Activated CD4-positive, alpha-beta T cell treated with anti-CD3 and anti-CD28 coated beads, Interleukin-2, amount 10 ng/mL, durations not matched to agents 24 days and 14 days (primary cell): ENCODE measurements at regions of chr12 and their contacts with region 1.

Region 1: DNA sequence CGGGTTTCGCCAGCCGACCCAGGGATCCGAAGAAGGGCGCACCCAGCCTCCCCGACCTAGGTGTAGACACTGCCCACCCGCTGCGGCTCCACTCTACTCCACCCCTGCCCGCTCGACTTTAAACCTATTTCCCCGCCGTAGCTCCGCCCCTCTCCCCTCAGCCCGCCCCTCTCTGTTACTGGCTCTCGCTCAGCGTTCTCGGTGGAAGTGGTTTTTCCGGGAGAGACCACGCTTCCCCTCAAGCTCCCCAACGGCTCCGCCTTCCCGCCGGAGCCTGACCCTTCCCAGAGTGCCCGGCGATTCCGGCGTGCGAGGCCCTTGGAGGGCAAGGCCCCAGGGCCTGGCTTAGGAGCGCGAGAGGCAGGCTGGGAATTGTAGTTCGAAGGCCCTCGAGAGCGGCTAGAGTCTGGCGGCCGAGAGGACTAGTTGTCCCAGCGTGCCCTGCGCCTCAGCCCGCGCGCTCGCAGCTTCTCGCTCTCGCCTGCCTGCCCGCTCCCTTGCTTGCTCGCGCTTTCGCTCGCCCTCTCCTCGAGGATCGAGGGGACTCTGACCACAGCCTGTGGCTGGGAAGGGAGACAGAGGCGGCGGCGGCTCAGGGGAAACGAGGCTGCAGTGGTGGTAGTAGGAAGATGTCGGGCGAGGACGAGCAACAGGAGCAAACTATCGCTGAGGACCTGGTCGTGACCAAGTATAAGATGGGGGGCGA is at the start of gene PA2G4:
- DNase-seq: peak; percentile 100
- H3K4me3 Mint-ChIP-seq: peak within 1 kb of the TSS; percentile 98
- H3K27ac Mint-ChIP-seq: peak within 1 kb of the TSS; percentile 98
- H3K4me1 Mint-ChIP-seq: peaks cover 38% of the 10 kb centered on the region
- H3K27me3 Mint-ChIP-seq: no peaks in the 10 kb centered on the region
- total RNA-seq, gene PA2G4: 453 and 472 TPM in 2 replicates

Region 2: GRCh38 chr12:55715833-55716581 is 388.3 kb before region 1 on chr12 and contains the start of gene BLOC1S1:
- intact Hi-C with region 1: loop called (anchors 1 kb)
- DNase-seq: peak; percentile 98
- H3K4me3 Mint-ChIP-seq: peak within 1 kb of the TSS; percentile 98
- H3K27ac Mint-ChIP-seq: peak within 1 kb of the TSS; percentile 98
- H3K4me1 Mint-ChIP-seq: peaks cover 27% of the 10 kb centered on the region
- H3K27me3 Mint-ChIP-seq: peaks cover 15% of the 10 kb centered on the region
- total RNA-seq, gene BLOC1S1: 62.7 and 64.8 TPM in 2 replicates

Region 3: DNA sequence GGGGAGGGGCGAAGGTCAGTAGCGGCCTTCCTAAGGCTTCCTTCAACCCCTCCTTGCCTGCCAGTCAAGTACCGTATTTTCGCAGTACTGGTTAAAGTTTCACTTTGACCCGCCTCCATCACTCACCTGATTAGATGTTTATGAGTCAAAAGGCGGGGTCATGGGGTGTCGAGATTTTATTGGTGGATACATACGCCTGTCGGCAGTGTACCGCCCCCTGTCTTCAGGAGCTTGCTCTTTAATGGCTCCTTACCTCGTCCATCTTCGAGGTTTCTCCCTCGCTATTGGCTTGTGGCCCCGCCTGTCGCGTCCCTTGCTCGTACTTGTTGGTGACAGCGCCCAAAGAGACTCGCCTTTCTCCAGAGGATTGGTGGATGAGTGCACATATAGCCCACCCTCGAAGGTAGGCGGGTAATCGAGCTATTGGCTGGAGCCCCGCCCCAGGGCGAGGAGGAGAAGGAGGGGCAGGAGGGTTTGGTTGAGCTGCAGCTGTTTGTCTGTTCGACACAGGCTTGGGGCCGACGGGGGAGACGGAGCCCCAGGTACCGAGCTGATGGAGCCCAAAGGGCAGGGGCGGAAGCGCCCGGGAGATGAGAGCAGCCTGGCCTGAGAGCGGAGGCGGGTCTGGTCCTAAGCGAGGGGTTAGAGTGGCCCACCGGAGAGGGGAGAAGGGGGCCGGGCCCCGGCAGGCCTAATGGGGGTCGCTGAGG is 130.5 kb before region 1 on chr12 and contains the start of gene RAB5B:
- intact Hi-C with region 1: loop called (anchors 1 kb)
- DNase-seq: peak; percentile 99
- H3K4me3 Mint-ChIP-seq: no peak within 1 kb of the TSS
- H3K27ac Mint-ChIP-seq: no peak within 1 kb of the TSS
- H3K4me1 Mint-ChIP-seq: peaks cover 28% of the 10 kb centered on the region
- H3K27me3 Mint-ChIP-seq: no peaks in the 10 kb centered on the region
- total RNA-seq, gene RAB5B: 39.0 and 40.2 TPM in 2 replicates

Region 4: DNA sequence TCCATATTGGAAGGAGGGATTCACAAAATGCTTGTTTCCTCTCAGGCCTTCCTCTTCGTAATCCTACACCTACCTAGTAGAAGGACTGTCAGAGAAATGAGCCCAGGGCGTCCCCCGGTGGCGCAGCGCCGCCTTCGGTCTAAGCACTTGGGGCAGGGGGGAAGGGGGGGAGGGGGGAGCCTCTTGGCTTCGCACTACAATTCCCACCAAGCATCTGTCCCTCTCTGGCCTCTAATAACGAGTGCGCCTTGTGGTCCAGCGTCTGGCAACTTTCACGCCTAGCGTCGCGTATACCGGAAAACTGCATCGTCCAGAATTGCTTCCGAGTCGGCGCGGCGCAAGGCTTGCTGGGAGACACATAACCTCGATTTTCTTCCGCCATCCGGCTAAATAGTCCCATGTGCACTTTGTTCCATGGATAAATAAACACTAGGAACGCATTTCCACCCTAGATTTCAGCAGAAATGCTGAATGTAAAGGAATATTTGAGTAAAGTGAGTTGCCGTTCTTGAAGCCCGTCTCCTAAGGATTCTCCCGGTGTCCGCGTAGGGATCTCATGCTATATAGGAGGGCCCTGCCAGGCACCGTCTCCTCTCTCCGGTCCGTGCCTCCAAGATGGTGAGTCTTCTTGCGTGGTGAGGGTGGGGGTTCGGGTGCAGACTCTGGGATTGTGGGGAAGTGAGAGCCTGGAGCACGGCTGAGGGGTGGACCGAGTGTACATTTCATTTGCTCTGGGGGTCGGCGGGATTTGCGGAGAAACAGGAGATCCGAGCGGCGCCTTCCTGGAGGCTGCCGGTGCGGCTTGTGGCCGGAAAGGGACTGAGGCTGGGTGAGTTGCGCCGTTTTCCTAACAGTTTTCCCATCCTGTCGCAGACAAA is 62.5 kb before region 1 on chr12 and contains the start of gene RPS26:
- intact Hi-C with region 1: loop called (anchors 1 kb)
- DNase-seq: peak; percentile 97
- H3K4me3 Mint-ChIP-seq: peak within 1 kb of the TSS; percentile 100
- H3K27ac Mint-ChIP-seq: peak within 1 kb of the TSS; percentile 99
- H3K4me1 Mint-ChIP-seq: peaks cover 50% of the 10 kb centered on the region
- H3K27me3 Mint-ChIP-seq: no peaks in the 10 kb centered on the region
- total RNA-seq, gene RPS26: 40.5 and 46.3 TPM in 2 replicates

Region 5: DNA sequence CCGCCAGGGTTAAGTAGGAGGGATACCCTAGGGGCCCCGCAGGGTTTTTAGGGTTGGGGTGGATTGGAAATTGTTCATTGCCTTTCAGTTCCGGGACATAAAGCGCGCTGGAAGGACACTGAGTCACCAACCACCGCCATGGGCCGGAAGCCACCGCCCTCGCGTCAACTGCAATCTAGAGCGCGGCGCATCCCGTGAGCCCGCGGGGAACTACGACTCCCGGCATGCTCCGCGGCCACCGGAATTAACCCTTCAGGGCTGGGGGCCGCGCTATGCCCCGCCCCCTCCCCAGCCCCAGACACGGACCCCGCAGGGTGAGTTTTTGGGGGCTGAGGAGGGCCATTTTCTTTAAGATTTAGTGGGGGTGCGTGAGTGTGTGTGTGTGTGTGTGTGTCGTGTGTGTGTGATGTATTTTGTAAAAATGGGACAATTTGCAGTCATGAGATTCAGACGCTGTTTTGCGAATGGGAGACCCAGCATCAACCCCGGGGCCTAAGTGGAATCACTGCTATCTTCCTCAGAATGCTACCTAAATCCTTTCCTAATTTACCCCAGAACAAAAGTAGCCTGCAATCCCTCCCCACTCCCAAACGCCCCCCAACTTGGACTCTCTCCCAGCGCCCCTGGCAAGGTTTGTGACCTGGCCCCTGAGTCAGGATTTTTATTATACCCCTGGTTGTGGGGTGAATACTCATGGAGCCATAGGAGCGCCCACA is 48.2 kb after region 1 on chr12 and contains the start of gene MYL6B:
- intact Hi-C with region 1: loop called (anchors 1 kb)
- DNase-seq: peak; percentile 98
- H3K4me3 Mint-ChIP-seq: peak within 1 kb of the TSS; percentile 88
- H3K27ac Mint-ChIP-seq: peak within 1 kb of the TSS; percentile 98
- H3K4me1 Mint-ChIP-seq: peaks cover 39% of the 10 kb centered on the region
- H3K27me3 Mint-ChIP-seq: no peaks in the 10 kb centered on the region
- total RNA-seq, gene MYL6B: 63.3 and 68.9 TPM in 2 replicates